Breast epithelium (tissue), 4 donors: ENCODE measurements at regions of chr1 and their contacts with region 1.

Region 1: GRCh38 chr1:113534130-113534817 is 144.0 kb downstream of the MAGI3 start:
- DNase-seq: no peak
- H3K4me3 ChIP-seq: no peak overlapping the region
- H3K27ac ChIP-seq: no peak overlapping the region
- H3K4me1 ChIP-seq: no peaks in the 10 kb centered on the region
- H3K27me3 ChIP-seq: no peaks in the 10 kb centered on the region
- CTCF ChIP-seq: no peak
- POLR2A ChIP-seq: no peak

Region 2: DNA sequence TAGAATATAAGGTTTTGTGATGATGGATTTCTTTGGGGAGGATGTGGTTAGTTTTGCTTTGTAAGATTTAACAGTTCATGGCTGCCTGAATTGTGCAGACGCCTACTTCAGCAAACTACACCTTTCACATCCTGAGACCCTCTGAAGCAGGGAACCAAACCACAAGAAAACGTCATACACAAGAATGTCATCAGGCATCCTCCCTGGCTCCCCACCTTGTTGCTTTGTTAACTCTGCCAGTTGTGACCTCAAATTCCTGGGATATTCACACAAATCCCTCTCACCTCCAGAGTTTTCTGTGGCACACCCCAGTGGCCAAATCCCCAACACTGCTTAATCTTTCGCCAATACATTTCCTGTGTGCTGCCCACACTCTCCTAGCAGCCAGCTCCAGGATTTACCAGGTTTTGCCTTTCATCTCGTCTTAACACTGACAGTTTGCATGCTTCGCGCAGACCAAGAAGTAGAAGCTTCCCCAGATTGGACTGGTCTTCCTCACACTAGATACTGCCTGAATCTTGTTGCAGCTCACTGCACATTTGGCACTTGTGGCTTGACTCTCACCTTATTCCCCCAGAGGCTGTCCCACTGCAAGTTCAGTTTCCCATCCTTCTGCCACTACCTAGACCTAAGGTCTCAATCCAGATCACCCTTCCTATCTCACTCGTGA is 1189.4 kb before region 1 on chr1:
- intact Hi-C with region 1: loop called (anchors 10 kb)
- DNase-seq: no peak
- H3K4me3 ChIP-seq: no peak overlapping the region
- H3K27ac ChIP-seq: no peak overlapping the region
- H3K4me1 ChIP-seq: no peaks in the 10 kb centered on the region
- H3K27me3 ChIP-seq: no peaks in the 10 kb centered on the region
- CTCF ChIP-seq: no peak
- POLR2A ChIP-seq: no peak

Region 3: GRCh38 chr1:113479713-113480676 is 54.3 kb before region 1 on chr1:
- intact Hi-C with region 1: no loop called
- DNase-seq: no peak
- H3K4me3 ChIP-seq: no peak overlapping the region
- H3K27ac ChIP-seq: no peak overlapping the region
- H3K4me1 ChIP-seq: no peaks in the 10 kb centered on the region
- H3K27me3 ChIP-seq: no peaks in the 10 kb centered on the region
- CTCF ChIP-seq: no peak
- POLR2A ChIP-seq: no peak

Region 4: DNA sequence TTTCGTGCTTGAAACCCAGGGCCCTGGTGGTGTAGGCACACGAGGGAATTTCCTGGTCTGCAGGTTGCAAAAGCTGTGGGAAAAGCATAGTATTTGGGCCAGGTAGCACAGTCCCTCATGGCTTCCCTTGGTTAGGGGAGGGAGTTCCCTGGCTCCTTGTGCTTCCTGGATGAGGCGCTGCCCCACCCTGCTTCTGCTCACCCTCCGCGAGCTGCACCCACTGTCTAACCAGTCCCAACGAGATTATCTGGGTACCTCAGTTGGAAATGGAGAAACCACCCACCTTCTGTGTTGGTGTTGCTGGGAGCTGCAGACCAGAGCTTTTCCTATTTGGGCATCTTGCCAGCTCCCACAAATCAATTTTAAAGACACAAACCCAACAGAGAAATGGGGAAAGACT is 42.0 kb after region 1 on chr1:
- intact Hi-C with region 1: no loop called
- DNase-seq: no peak
- H3K4me3 ChIP-seq: no peak overlapping the region
- H3K27ac ChIP-seq: no peak overlapping the region
- H3K4me1 ChIP-seq: no peaks in the 10 kb centered on the region
- H3K27me3 ChIP-seq: no peaks in the 10 kb centered on the region
- CTCF ChIP-seq: no peak
- POLR2A ChIP-seq: no peak

Region 5: DNA sequence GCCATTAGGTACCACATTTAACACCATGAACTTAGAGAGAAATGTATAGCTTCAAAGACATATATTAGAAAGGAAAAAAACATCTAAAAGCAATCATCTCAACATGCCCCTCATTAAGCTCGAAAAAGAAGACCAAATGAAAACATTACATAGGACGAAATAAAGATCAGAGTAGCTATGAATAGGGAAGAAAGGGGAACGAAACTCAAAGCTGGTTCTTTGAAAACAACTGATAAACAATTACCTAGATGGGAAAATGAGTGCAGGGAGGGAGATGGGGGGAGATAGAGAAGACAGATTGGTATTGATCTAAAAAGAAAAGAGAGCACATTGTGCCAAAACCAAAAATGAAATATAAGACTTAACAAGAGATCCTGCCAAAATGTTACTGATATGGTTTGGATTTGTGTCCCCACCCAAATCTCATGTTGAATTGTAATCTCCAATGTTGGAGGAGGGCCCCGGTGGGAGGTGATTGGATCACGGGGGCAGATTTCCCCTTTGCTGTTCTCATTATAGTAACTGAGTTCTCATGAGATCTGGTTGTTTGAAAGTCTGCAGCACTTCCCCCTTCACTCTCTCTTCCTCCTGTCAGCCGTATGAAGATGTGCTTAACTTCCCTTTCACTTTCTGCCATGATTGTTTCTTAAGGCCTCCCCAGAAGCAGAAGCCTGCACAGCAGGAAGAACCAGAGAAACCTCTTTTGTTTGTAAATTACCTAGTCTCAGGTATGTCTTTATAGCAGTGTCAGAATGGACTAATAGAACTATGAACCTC is 948.1 kb after region 1 on chr1:
- intact Hi-C with region 1: no loop called
- DNase-seq: no peak
- H3K4me3 ChIP-seq: no peak overlapping the region
- H3K27ac ChIP-seq: no peak overlapping the region
- H3K4me1 ChIP-seq: no peaks in the 10 kb centered on the region
- H3K27me3 ChIP-seq: no peaks in the 10 kb centered on the region
- CTCF ChIP-seq: no peak
- POLR2A ChIP-seq: no peak